Activated T-helper 1 cell treated with anti-CD3 and anti-CD28 coated beads, Interleukin-12 subunit alpha, Interleukin-12 subunit beta, Interleukin-2, Interleukin-4 antibody, amounts not matched to agents 30 ng/mL and 10 ng/mL and 1 ng/mL, durations not matched to agents 14 hours and 24 hours and 36 hours (primary cell): ENCODE measurements at regions of chr16 and their contacts with region 1.

Region 1: DNA sequence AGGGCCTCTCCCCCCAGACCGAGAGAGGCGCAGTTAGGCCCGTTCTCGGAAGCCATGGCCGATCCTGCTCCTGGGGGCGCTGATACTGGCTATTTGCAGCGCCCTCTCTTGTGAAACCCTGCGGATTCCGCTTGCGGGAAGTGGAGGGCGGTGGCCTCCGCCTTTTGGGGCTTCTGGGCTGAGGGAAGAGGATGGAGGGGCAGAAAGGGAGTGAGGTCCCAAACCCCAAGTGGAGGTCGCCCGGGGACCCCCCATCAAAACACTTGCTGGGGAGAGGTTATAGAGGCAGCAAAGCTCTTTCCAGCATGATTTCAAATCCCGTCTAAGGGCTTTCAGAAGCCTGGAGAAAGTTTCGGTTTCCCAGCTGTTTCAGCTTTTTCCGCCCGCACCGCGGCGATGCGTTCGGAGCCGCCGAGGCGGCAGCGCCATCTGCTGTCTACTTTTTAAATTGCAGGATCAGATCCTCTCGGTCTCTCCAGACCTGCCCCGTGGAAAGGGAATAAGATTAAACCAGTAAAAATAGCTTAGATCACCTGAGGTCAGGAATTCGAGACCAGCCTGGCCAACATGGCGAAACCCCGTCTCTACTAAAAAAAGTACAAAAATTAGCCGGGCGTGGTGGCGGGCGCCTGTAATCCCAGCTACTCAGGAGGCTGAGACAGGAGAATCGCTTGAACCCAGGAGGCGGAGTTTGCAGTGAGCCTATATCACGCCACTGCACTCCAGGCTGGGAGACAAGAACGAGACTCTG is 15.8 kb downstream of the SNX20 start:
- DNase-seq: peak; percentile 76
- H3K4me3 Mint-ChIP-seq: peak overlapping the region; percentile 66
- H3K27ac Mint-ChIP-seq: peak overlapping the region; percentile 68
- H3K4me1 Mint-ChIP-seq: peaks cover 43% of the 10 kb centered on the region
- H3K27me3 Mint-ChIP-seq: no peaks in the 10 kb centered on the region

Region 2: DNA sequence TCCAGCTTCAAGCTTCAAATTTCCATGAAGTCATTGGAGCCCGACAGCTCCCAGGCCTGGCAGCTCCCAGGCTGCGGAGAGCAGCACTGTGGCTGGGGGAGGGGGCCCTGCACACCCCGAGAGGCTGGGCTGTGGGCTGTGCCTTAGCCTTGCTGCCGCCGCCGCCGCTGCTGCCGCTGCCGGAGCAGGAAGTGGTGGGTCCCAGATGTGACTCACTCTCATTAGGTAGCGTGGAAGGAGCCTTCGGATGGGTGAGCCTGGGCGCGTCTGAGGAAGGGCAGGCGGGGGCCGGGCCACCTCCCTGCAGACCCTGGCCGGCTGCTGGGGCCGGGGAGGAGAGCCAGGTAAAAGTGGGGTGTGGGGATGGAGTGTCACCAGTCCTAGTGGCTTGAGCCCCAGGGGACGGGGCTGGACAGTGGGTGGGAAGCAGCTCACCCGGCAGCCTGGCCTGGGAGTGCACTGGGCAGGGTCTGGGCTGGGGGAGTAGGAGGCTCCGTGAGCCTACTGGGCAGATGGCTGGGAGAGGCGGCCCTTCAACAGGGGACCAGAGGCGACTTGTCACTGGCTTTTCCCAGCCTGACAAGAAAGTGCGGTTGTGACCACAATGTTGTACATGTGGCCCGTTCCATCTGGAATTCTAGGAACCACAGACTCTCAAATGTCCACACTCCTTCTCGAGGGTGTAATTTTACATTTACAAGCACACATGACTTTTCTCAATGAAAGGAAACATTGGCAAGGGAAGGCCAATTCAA is 398.8 kb before region 1 on chr16 and contains the start of gene ADCY7:
- intact Hi-C with region 1: loop called (anchors 1 kb)
- DNase-seq: peak; percentile 79
- H3K4me3 Mint-ChIP-seq: peak within 1 kb of the TSS; percentile 86
- H3K27ac Mint-ChIP-seq: peak within 1 kb of the TSS; percentile 96
- H3K4me1 Mint-ChIP-seq: peaks cover 86% of the 10 kb centered on the region
- H3K27me3 Mint-ChIP-seq: no peaks in the 10 kb centered on the region
- total RNA-seq, gene ADCY7: 78.0 and 81.9 TPM in 2 replicates

Region 3: GRCh38 chr16:50548125-50548908 is 117.0 kb before region 1 on chr16 and contains the start of gene NKD1:
- intact Hi-C with region 1: loop called (anchors 1 kb)
- DNase-seq: peak; percentile 65
- H3K4me3 Mint-ChIP-seq: peak within 1 kb of the TSS; percentile 91
- H3K27ac Mint-ChIP-seq: peak within 1 kb of the TSS; percentile 59
- H3K4me1 Mint-ChIP-seq: peaks cover 14% of the 10 kb centered on the region
- H3K27me3 Mint-ChIP-seq: peaks cover 37% of the 10 kb centered on the region
- total RNA-seq, gene NKD1: 1.1 and 1.4 TPM in 2 replicates

Region 4: DNA sequence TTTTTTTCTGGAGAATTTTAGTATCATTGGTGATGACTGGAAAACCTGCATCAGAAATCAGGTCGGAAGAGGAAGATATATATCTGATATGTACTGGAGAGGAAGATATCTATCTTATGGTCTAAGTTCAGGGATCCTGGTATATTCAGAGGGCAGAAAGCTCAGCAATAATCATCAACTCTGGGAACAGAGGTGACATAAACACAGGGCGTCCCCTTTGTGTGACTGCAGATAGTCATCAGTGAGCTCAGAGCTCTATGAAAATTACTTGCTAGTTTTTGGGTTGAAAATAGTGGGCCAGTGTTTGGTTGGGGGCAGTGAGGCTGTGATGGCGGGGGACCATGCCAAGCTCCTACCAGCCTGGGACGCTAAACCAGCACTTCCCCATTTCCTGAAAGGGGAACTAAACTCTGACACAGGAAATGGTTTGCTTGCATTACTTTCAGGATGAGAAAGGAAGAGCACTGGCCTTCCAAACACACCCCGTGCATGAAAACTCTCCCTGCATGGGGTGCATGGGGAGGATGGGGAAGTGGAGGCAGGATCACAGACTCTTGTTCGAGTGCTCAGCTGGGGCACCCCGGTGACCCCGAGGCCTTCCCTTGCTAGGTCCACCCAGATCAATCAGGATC is 43.9 kb after region 1 on chr16:
- intact Hi-C with region 1: loop called (anchors 2 kb)
- DNase-seq: no peak
- H3K4me3 Mint-ChIP-seq: peak overlapping the region; percentile 35
- H3K27ac Mint-ChIP-seq: peak overlapping the region; percentile 81
- H3K4me1 Mint-ChIP-seq: peaks cover 47% of the 10 kb centered on the region
- H3K27me3 Mint-ChIP-seq: no peaks in the 10 kb centered on the region

Region 5: GRCh38 chr16:50763211-50763610 is 97.9 kb after region 1 on chr16:
- intact Hi-C with region 1: loop called (anchors 5 kb)
- DNase-seq: no peak
- H3K4me3 Mint-ChIP-seq: no peak overlapping the region
- H3K27ac Mint-ChIP-seq: peak overlapping the region; percentile 13
- H3K4me1 Mint-ChIP-seq: peaks cover 84% of the 10 kb centered on the region
- H3K27me3 Mint-ChIP-seq: no peaks in the 10 kb centered on the region

Region 6: GRCh38 chr16:50836121-50836621 is 170.9 kb after region 1 on chr16:
- intact Hi-C with region 1: no loop called
- DNase-seq: no peak
- H3K4me3 Mint-ChIP-seq: no peak overlapping the region
- H3K27ac Mint-ChIP-seq: no peak overlapping the region
- H3K4me1 Mint-ChIP-seq: peaks cover 4% of the 10 kb centered on the region
- H3K27me3 Mint-ChIP-seq: peaks cover 7% of the 10 kb centered on the region